ENCODE measurements at regions of chr19 and their contacts with region 1.

Region 1: GRCh38 chr19:9934132-9934950 is 2.0 kb downstream of the OLFM2 start:
- DNase-seq: peak in 1 of 2 donors; percentile 88
- H3K4me3 ChIP-seq: peak overlapping the region in 1 of 2 donors; percentile 60
- H3K27ac ChIP-seq: peak overlapping the region; percentile 83
- H3K4me1 ChIP-seq: peaks cover 27% of the 10 kb centered on the region
- H3K27me3 ChIP-seq: no peaks in the 10 kb centered on the region
- CTCF ChIP-seq: peak; percentile 74 to 92 (median 91)
- POLR2A ChIP-seq: no peak

Region 2: DNA sequence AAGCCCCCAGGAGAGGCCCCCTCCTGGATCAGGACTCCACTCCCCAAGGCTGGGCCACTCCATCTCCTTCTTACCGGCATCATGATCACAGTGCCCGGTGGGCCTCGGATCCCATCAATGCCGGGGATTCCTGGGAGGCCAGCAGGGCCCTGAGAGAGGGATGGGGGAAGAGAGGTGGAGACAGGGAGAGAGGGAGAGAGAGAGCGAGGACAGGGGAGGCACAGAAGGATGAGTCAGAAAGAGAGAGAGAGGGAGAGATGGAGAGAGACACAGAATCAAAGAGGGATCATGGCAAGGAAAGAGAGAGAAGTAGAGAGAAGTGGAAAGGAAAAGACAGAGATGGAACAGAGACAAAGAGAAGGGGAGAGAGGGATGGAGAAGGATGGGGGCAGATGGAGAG is 62.2 kb after region 1 on chr19:
- intact Hi-C with region 1: loop called (anchors 10 kb)
- DNase-seq: no peak
- H3K4me3 ChIP-seq: no peak overlapping the region
- H3K27ac ChIP-seq: no peak overlapping the region
- H3K4me1 ChIP-seq: peaks cover 3% of the 10 kb centered on the region
- H3K27me3 ChIP-seq: no peaks in the 10 kb centered on the region
- CTCF ChIP-seq: no peak
- POLR2A ChIP-seq: no peak

Region 3: DNA sequence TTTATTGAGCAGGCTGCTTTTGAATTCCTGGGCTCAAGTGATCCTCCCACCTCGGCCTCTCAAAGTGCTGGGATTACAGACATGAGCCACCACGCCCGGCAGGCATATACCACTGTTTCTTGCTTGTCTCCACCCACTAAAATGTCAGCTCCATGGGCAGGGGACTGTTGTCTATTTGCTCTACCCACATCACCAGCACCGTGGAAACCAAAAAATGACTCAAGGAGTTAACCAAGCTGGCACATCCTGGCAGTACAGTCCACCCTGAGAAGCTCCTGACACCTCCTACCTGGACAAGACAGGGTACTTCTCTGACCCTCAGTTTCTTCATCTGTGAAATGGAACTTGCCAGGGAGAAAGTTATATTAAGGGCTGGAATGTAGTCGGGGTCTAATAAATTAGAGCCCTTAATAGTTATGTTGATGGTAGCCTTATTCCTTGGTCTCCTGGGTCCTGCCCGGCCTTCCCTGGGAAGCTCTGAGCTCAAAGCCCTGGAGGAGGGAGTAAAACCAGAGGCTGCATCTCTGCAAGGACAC is 92.9 kb after region 1 on chr19:
- intact Hi-C with region 1: loop called (anchors 5 kb)
- DNase-seq: no peak
- H3K4me3 ChIP-seq: peak overlapping the region in 1 of 2 donors; percentile 4
- H3K27ac ChIP-seq: no peak overlapping the region
- H3K4me1 ChIP-seq: peaks cover 6% of the 10 kb centered on the region
- H3K27me3 ChIP-seq: no peaks in the 10 kb centered on the region
- CTCF ChIP-seq: no peak
- POLR2A ChIP-seq: no peak

Region 4: DNA sequence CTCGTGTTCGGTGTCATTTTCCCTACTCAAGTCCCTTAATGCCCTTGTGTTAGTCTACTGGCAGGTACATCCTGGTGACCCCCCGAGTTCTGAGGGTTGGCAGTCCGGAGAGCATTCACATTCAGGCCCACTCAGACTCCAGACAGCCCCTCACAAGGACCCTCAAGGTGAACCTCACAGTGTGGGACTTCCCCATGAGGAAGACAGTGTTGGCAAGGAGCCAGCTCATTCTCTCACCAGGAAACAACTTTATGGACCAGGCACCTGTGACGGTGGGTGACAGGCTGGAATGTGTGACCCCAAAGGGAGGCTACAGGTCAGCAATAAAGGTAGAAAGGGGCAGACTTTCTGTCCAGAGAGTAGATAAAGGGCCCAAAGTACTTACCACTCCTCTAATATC is 103.5 kb after region 1 on chr19:
- intact Hi-C with region 1: no loop called
- DNase-seq: no peak
- H3K4me3 ChIP-seq: no peak overlapping the region
- H3K27ac ChIP-seq: no peak overlapping the region
- H3K4me1 ChIP-seq: no peaks in the 10 kb centered on the region
- H3K27me3 ChIP-seq: no peaks in the 10 kb centered on the region
- CTCF ChIP-seq: no peak
- POLR2A ChIP-seq: no peak

Measured in vagina (tissue), 2 donors.